ENCODE measurements at regions of chr7 and their contacts with region 1.

Region 1: DNA sequence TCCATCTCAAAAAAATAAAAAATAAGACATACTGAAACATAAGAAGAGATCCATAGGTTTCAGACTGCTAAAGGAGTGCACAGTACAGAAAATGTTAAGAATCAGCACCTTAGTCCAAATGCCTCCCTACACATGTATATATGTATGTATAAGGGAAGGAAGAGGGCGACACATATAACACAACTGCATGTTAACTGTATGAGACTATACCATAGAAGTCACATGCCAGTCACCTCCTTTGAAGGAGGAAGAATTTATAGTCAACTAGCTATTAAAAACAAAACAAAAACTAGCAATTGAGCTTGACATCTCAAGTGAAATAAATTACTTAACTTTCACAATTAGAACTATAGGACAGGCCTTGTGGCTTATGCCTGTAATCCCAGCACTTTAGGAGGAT is 50.4 kb downstream of the IGF2BP3 start:
- DNase-seq: no peak
- ATAC-seq: no peak
- H3K4me3 Mint-ChIP-seq: no peak overlapping the region
- H3K27ac Mint-ChIP-seq: no peak overlapping the region
- H3K4me1 Mint-ChIP-seq: peaks cover 2% of the 10 kb centered on the region
- H3K27me3 Mint-ChIP-seq: peaks cover 4% of the 10 kb centered on the region

Region 2: GRCh38 chr7:23431702-23432199 is 11.9 kb after region 1 on chr7:
- CTCF ChIA-PET with region 1: interaction called, 13 read pairs
- POLR2A ChIA-PET with region 1: no interaction called
- DNase-seq: no peak
- ATAC-seq: no peak
- H3K4me3 Mint-ChIP-seq: no peak overlapping the region
- H3K27ac Mint-ChIP-seq: no peak overlapping the region
- H3K4me1 Mint-ChIP-seq: no peaks in the 10 kb centered on the region
- H3K27me3 Mint-ChIP-seq: peaks cover 17% of the 10 kb centered on the region

Measured in activated CD8-positive, alpha-beta T cell treated with anti-CD3 and anti-CD28 coated beads, Interleukin-2, amount 10 ng/mL, durations not matched to agents 7 days and 5 days (primary cell).